GM10248 (cell line): ENCODE measurements at regions of chr5 and their contacts with region 1.

Region 1: DNA sequence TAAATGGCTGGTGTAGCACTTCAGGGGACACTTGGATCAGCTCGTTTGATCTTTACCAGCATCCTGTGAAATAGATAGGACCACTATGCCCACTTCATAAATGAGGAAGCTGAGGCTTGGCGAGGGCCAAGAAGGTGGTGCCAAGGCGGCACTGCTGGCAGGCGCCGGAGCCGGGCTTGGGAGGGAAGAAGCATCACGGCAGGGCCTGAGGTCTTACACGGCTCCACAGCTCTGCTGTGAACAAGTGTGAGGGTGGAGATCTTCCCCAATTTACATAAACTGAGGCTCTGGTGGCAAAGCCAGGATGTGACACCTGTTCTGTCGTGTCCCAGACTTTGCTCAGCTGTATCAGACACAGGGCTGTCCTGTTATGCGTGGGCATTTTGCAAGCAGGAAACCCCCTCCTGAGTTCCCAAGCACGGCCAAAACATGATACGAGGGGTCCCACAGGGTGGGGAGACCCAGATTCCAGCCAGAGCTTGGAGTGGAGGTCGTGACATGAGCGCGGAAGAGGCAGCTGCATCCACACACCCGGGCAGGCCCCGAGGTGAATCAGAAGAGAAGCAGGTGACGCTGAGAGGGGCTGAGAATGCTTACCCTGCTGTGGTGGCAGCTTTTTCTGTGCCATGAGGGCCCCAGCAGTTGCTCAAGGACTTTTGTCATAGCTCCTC is 117.5 kb upstream of the BOD1 start:
- DNase-seq: peak; percentile 82
- CTCF ChIP-seq: no peak

Region 2: DNA sequence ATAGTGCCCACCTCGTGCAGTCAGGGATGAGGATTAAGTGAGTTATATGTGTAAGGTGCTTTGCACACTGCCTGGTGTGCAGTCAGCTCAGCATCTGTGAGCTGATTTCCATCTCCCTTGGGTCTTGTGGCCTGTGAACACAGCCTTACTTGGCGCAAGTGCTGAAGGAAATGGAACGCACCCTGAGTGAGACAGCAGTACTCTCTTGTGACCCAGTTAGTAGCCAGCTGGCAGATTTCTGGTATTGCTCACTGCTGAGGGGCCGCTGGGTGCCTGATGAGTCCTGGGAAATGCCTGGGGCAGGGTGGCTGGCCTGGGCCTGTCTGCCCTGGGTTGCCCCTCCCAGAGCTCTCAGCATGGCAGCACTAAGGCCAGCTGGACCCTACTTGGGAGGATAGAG is 26.6 kb before region 1 on chr5:
- CTCF ChIA-PET with region 1: no interaction called
- POLR2A ChIA-PET with region 1: no interaction called
- DNase-seq: no peak
- CTCF ChIP-seq: no peak

Region 3: DNA sequence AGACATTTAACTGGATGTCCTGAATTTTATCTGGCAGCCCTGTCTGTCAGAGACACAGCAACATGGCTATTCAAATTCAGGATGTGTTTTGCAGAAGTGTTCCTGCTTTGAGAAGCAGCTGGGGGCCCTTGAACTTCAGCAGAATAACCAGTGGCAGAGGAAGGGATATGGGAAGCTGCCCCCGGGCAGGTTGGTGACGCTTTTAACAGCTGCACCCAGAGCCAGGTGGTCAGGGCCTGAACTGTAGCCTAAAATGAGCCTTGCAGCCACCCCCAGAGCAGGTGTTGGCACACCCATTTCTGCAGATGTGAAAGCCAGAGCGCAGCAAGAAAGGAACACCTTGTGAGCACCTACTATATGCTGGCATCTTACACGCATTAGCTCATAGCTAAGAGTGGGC is 11.2 kb after region 1 on chr5:
- CTCF ChIA-PET with region 1: interaction called, 12 read pairs
- POLR2A ChIA-PET with region 1: no interaction called
- DNase-seq: peak; percentile 40
- CTCF ChIP-seq: no peak

Region 4: GRCh38 chr5:173759691-173760090 is 25.7 kb after region 1 on chr5:
- CTCF ChIA-PET with region 1: no interaction called
- POLR2A ChIA-PET with region 1: no interaction called
- DNase-seq: no peak
- CTCF ChIP-seq: no peak